Activated CD4-positive, alpha-beta T cell treated with anti-CD3 and anti-CD28 coated beads for 36 hours (primary cell): ENCODE measurements at regions of chr16 and their contacts with region 1.

Region 1: GRCh38 chr16:67561824-67562525 is 351 bp upstream of the CTCF start:
- DNase-seq: peak; percentile 99
- ATAC-seq: peak; percentile 87
- H3K4me3 Mint-ChIP-seq: peak overlapping the region; percentile 84
- H3K27ac Mint-ChIP-seq: peak overlapping the region; percentile 85
- H3K4me1 Mint-ChIP-seq: peaks cover 41% of the 10 kb centered on the region
- H3K27me3 Mint-ChIP-seq: no peaks in the 10 kb centered on the region

Region 2: GRCh38 chr16:67191995-67192681 is 369.8 kb before region 1 on chr16 and contains the start of gene E2F4:
- CTCF ChIA-PET with region 1: no interaction called
- POLR2A ChIA-PET with region 1: interaction called, 3 read pairs
- intact Hi-C with region 1: loop called in 1 of 2 experiments (anchors 2 kb)
- DNase-seq: peak; percentile 92
- ATAC-seq: peak; percentile 96
- H3K4me3 Mint-ChIP-seq: peak within 1 kb of the TSS; percentile 93
- H3K27ac Mint-ChIP-seq: peak within 1 kb of the TSS; percentile 93
- H3K4me1 Mint-ChIP-seq: peaks cover 32% of the 10 kb centered on the region
- H3K27me3 Mint-ChIP-seq: no peaks in the 10 kb centered on the region
- total RNA-seq, gene E2F4: 91.4 to 110 TPM

Region 3: DNA sequence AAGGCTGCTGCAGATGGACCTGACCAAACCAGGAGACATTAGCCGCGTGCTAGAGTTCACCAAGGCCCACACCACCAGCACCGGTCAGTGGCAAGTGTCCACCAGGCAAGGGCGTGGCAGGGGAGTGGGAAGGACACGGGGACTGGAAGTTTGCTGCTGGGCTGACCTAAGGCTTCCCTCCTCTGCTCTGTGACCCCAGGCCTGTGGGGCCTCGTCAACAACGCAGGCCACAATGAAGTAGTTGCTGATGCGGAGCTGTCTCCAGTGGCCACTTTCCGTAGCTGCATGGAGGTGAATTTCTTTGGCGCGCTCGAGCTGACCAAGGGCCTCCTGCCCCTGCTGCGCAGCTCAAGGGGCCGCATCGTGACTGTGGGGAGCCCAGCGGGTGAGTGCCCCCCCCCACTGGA is 126.2 kb before region 1 on chr16:
- CTCF ChIA-PET with region 1: no interaction called
- POLR2A ChIA-PET with region 1: no interaction called
- intact Hi-C with region 1: no loop called
- DNase-seq: no peak
- ATAC-seq: no peak
- H3K4me3 Mint-ChIP-seq: no peak overlapping the region
- H3K27ac Mint-ChIP-seq: no peak overlapping the region
- H3K4me1 Mint-ChIP-seq: peaks cover 12% of the 10 kb centered on the region
- H3K27me3 Mint-ChIP-seq: peaks cover 7% of the 10 kb centered on the region

Region 4: GRCh38 chr16:67480833-67481560 is 81.0 kb before region 1 on chr16 and contains the start of gene ATP6V0D1:
- CTCF ChIA-PET with region 1: interaction called, 9 read pairs
- POLR2A ChIA-PET with region 1: interaction called, 3 read pairs
- intact Hi-C with region 1: loop called (anchors 1 kb)
- DNase-seq: peak; percentile 100
- ATAC-seq: peak; percentile 92
- H3K4me3 Mint-ChIP-seq: peak within 1 kb of the TSS; percentile 97
- H3K27ac Mint-ChIP-seq: peak within 1 kb of the TSS; percentile 98
- H3K4me1 Mint-ChIP-seq: peaks cover 31% of the 10 kb centered on the region
- H3K27me3 Mint-ChIP-seq: no peaks in the 10 kb centered on the region
- total RNA-seq, gene ATP6V0D1: 16.3 to 17.3 TPM

Region 5: GRCh38 chr16:67595033-67595355 is 33.0 kb after region 1 on chr16:
- CTCF ChIA-PET with region 1: interaction called, 4 read pairs
- POLR2A ChIA-PET with region 1: no interaction called
- intact Hi-C with region 1: loop called in 1 of 2 experiments (anchors 5 kb)
- DNase-seq: peak; percentile 44
- ATAC-seq: peak; percentile 81
- H3K4me3 Mint-ChIP-seq: no peak overlapping the region
- H3K27ac Mint-ChIP-seq: peak overlapping the region; percentile 53
- H3K4me1 Mint-ChIP-seq: peaks cover 36% of the 10 kb centered on the region
- H3K27me3 Mint-ChIP-seq: no peaks in the 10 kb centered on the region

Region 6: DNA sequence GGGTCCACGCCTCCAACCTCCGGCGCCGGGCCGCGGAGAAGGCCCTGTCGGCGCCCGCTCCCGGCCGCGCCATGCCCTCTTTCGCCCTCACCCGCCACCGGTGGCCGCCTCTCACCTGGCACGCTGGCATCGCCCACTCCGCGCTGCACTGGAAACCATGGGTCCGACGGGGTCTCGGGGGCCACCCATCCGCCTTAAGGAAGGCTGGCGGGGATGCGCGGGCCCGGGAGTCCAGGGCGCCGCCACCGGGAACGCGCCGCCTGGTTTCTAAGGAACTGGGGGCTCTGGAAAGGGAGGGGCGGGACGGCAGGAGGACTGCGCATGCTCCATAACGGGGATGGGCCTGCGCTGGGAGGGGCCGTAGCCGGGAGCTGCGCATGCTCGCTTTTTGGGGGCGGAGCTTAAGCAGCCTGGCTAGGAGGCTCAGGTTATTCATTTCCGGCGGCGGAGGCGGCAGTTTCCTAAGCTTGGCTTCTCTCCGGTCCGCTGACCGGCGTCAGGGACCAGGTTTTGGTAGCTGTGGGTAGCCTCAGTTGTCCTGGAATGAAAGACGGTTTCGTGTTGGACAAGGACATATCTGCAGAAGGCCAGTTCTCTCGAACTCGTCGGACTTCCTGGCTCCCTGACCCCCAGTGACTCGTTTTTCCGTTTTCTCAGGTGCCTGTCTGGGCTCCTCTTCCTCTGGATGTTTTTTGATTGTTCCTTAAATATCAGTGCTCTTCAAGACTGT is 157.2 kb after region 1 on chr16 and contains the start of gene GFOD2:
- CTCF ChIA-PET with region 1: interaction called, 3 read pairs
- POLR2A ChIA-PET with region 1: no interaction called
- intact Hi-C with region 1: loop called in 1 of 2 experiments (anchors 1 kb)
- DNase-seq: peak; percentile 99
- ATAC-seq: peak; percentile 95
- H3K4me3 Mint-ChIP-seq: peak within 1 kb of the TSS; percentile 82
- H3K27ac Mint-ChIP-seq: peak within 1 kb of the TSS; percentile 98
- H3K4me1 Mint-ChIP-seq: peaks cover 29% of the 10 kb centered on the region
- H3K27me3 Mint-ChIP-seq: no peaks in the 10 kb centered on the region
- total RNA-seq, gene GFOD2: 8.7 to 11.5 TPM

Region 7: GRCh38 chr16:67935402-67936123 is 373.6 kb after region 1 on chr16:
- CTCF ChIA-PET with region 1: no interaction called
- POLR2A ChIA-PET with region 1: no interaction called
- intact Hi-C with region 1: loop called (anchors 1 kb)
- DNase-seq: peak; percentile 98
- ATAC-seq: peak; percentile 91
- H3K4me3 Mint-ChIP-seq: peak overlapping the region; percentile 100
- H3K27ac Mint-ChIP-seq: peak overlapping the region; percentile 100
- H3K4me1 Mint-ChIP-seq: peaks cover 37% of the 10 kb centered on the region
- H3K27me3 Mint-ChIP-seq: no peaks in the 10 kb centered on the region

Region 8: GRCh38 chr16:69339289-69340108 is 1777.5 kb after region 1 on chr16 and contains the starts of genes COG8 and NIP7:
- CTCF ChIA-PET with region 1: no interaction called
- POLR2A ChIA-PET with region 1: no interaction called
- intact Hi-C with region 1: loop called in 1 of 2 experiments (anchors 10 kb)
- DNase-seq: peak; percentile 95
- ATAC-seq: peak; percentile 89
- H3K4me3 Mint-ChIP-seq: peak within 1 kb of the TSS; percentile 96
- H3K27ac Mint-ChIP-seq: peak within 1 kb of the TSS; percentile 98
- H3K4me1 Mint-ChIP-seq: peaks cover 37% of the 10 kb centered on the region
- H3K27me3 Mint-ChIP-seq: no peaks in the 10 kb centered on the region
- total RNA-seq, gene COG8: 30.0 to 30.3 TPM
- total RNA-seq, gene NIP7: 39.1 to 41.3 TPM